Heart left ventricle (tissue), 16 donors: ENCODE measurements at regions of chr9 and their contacts with region 1.

Region 1: GRCh38 chr9:29668732-29669131 is 2095.5 kb upstream of the C9orf72 start:
- DNase-seq: no peak
- ATAC-seq: no peak
- H3K4me3 ChIP-seq: no peak overlapping the region
- H3K27ac ChIP-seq: no peak overlapping the region
- H3K4me1 ChIP-seq: no peaks in the 10 kb centered on the region
- H3K27me3 ChIP-seq: no peaks in the 10 kb centered on the region
- CTCF ChIP-seq: no peak
- POLR2A ChIP-seq: no peak

Region 2: GRCh38 chr9:29060041-29060440 is 608.7 kb before region 1 on chr9:
- intact Hi-C with region 1: loop called in 1 of 10 experiments (anchors 10 kb)
- DNase-seq: no peak
- ATAC-seq: no peak
- H3K4me3 ChIP-seq: no peak overlapping the region
- H3K27ac ChIP-seq: no peak overlapping the region
- H3K4me1 ChIP-seq: no peaks in the 10 kb centered on the region
- H3K27me3 ChIP-seq: no peaks in the 10 kb centered on the region
- CTCF ChIP-seq: no peak
- POLR2A ChIP-seq: no peak

Region 3: DNA sequence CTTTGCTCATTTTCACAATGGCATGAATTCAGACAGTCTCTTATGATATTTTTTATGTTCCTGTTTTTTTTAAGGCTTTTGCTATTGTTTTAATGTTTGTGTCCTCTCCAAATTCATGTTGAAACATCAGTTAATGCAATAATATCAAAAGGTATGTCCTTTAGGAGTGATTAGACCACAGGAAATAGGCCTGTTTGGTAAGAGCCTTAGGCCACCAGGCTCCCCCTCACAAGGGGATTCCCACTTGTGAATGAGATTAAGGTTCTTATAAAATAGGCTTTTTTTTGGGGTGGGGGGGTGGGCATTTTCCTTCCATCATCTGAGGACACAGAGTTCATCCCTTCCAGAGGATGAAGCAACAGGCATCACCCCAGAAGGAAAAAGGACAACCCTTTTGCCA is 21.3 kb before region 1 on chr9:
- intact Hi-C with region 1: loop called in 1 of 10 experiments (anchors 2 kb)
- DNase-seq: no peak
- ATAC-seq: no peak
- H3K4me3 ChIP-seq: no peak overlapping the region
- H3K27ac ChIP-seq: no peak overlapping the region
- H3K4me1 ChIP-seq: no peaks in the 10 kb centered on the region
- H3K27me3 ChIP-seq: no peaks in the 10 kb centered on the region
- CTCF ChIP-seq: no peak
- POLR2A ChIP-seq: no peak

Region 4: DNA sequence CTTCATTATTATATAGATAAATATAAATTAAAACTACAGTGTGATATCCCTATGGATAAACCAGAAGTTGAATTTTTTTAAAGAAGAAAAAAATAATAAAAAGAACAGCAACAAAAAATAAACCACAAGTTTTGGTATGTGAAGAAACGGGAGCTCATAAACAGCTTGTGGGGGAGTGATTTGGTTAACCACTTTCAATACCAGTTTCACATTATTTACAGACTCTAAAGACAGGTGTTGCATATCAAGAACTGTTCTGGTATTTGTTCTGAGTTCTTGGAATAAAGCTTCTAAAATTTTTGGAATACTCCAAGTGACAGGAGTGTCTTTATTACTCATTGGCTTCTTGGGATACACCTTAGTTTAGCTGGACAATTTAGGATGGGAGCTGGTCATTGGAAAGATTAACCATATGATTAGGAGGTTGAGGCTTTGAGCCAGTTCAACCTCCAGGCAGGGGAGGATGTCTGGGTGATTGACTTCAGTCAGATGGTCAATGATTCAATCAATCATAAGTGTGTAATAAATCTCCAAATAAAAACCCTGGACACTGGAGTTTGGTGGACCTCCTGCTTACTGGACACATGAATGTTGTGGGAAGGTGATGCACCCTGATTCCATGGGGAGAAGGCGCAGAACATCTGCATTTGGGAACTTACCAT is 127.7 kb after region 1 on chr9:
- intact Hi-C with region 1: no loop called
- DNase-seq: no peak
- ATAC-seq: no peak
- H3K4me3 ChIP-seq: no peak overlapping the region
- H3K27ac ChIP-seq: no peak overlapping the region
- H3K4me1 ChIP-seq: no peaks in the 10 kb centered on the region
- H3K27me3 ChIP-seq: no peaks in the 10 kb centered on the region
- CTCF ChIP-seq: no peak
- POLR2A ChIP-seq: no peak

Region 5: DNA sequence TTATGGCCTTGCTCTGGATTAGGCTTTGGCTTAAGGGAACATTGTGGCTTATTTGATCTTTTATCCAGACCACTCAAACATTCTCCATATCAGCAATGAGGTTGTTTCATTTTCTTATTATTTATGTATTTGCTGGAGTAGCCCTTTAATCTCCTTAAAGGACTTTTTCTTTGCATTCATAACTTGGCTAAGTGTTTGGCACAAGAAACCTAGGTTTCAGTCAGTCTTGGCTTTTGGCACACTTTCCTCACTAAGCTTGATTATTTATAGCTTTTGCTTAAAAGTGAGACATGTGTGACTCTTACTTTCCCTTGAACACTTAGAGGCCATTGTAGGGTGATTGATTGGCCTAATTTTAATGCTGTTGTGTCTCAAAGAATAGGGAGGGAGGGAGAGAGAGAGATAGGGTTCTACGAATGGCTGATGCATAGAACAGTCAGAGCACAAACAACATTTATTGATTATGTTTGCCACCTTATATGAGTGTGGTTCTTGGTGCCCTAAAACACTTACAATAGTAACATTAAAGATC is 169.8 kb after region 1 on chr9:
- intact Hi-C with region 1: no loop called
- DNase-seq: no peak
- ATAC-seq: no peak
- H3K4me3 ChIP-seq: no peak overlapping the region
- H3K27ac ChIP-seq: no peak overlapping the region
- H3K4me1 ChIP-seq: no peaks in the 10 kb centered on the region
- H3K27me3 ChIP-seq: no peaks in the 10 kb centered on the region
- CTCF ChIP-seq: no peak
- POLR2A ChIP-seq: no peak